Upper lobe of right lung (tissue), 1 donor: ENCODE measurements at regions of chr11 and their contacts with region 1.

Region 1: GRCh38 chr11:2196970-2197770 is 25.6 kb upstream of the TH start:
- DNase-seq: peak; percentile 90
- ATAC-seq: peak; percentile 89
- H3K4me3 ChIP-seq: no peak overlapping the region
- H3K27ac ChIP-seq: no peak overlapping the region
- H3K4me1 ChIP-seq: peaks cover 3% of the 10 kb centered on the region
- H3K27me3 ChIP-seq: peaks cover 5% of the 10 kb centered on the region
- CTCF ChIP-seq: peak; percentile 80

Region 2: DNA sequence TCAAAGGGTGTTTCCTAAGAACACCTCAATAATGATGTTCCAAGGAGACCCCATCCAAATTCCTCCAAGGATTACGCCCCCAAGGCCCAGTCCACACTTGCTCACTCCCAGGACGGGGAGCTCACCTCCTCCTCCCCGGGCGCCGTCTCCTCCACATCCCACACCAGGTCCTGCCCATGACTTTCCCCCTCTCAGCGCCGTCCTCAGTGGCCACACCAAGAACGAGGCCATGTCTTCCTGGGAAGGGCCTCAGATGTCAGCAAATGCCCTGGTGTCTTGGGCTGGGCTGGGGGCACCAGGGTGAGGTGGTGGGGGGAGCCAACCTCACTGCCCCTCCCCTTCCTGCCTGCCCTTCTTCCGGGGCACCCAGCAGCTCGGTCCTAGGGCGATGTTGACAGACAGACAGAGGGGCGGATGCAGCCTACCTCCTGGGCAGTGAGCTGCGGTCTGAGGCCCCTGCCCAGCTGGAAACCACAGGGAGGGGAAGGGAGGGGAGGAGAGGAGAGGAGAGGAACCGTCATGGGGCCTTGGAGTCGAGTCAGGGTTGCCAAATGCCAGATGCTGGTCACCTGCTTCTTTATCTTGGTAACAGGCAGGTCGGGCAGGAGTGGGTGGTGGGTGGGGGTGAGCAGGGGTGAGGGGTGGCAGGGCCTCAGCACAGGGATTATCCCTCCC is 104.6 kb after region 1 on chr11 and contains the starts of genes C11orf21 and TSPAN32:
- intact Hi-C with region 1: loop called (anchors 5 kb)
- DNase-seq: peak; percentile 81
- ATAC-seq: peak; percentile 69
- H3K4me3 ChIP-seq: peak within 1 kb of the TSS; percentile 31
- H3K27ac ChIP-seq: peak within 1 kb of the TSS; percentile 66
- H3K4me1 ChIP-seq: peaks cover 31% of the 10 kb centered on the region
- H3K27me3 ChIP-seq: no peaks in the 10 kb centered on the region
- CTCF ChIP-seq: no peak
- total RNA-seq, gene C11orf21: 6.5 TPM
- total RNA-seq, gene TSPAN32: 12.2 TPM

Region 3: DNA sequence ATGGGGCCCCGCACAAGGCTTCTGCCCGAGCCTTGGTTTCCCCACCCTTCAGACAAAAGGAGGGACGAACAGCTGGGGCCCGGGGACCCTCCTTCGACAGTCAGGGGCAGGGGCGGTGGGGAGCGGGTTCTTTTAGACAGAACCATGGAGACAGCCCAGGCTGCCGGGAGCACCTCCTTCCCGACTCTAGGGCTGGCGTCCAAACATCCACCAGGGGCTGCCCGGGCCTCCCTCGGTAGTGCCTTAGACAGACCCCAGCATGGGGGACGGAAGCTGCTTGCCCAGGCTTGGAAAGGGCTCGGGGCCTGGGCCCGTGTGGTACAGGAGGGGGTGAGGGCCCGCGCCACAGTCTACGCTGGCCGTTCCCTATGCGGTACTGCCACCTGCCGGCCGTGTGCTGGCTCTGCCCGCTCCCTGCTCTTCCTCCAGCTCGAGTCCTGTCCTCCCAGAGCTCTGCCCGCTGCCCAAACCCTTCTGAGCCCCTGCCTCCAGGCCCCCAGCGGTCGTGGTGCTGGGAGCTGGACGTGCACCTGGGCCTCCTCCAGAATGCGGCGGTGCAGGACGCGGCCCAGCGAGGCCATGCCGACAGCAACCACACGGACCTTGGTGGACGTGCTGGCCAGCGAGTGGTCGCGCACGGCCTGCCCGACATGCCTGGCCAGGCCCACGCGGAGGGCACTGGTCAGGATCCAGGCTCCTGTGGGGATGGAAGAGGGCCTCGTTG is 223.5 kb after region 1 on chr11:
- intact Hi-C with region 1: loop called (anchors 5 kb)
- DNase-seq: peak; percentile 88
- ATAC-seq: peak; percentile 93
- H3K4me3 ChIP-seq: no peak overlapping the region
- H3K27ac ChIP-seq: no peak overlapping the region
- H3K4me1 ChIP-seq: peaks cover 8% of the 10 kb centered on the region
- H3K27me3 ChIP-seq: no peaks in the 10 kb centered on the region
- CTCF ChIP-seq: peak; percentile 95